GM18951 (cell line): ENCODE measurements at regions of chrX and their contacts with region 1.

Region 1: GRCh38 chrX:120999413-120999812 is 13.9 kb upstream of the CT47A1 start:
- POLR2A ChIP-seq: no peak

Region 2: DNA sequence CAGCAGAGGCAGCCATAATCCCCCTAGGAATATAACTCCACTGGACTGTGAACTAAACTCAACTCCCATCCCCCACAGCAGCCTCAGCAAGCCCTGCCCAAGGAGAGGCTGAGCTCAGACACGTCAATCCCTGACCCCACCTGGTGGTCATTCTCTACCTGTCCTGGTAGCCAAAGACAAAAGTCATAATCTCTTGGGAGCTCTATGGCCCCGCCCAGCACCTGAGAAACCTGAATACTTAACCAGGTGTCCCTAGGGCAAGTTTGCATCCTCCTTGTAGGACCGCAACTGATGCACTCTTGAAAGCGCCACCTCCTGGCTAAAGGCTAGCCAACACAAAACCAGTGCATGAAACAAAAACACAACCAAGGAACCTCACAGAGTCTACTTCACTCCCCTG is 142.2 kb before region 1 on chrX:
- in situ Hi-C with region 1: loop called (anchors 25 kb)
- POLR2A ChIP-seq: no peak